Activated CD4-positive, alpha-beta T cell treated with anti-CD3 and anti-CD28 coated beads, Interleukin-2, amount 10 ng/mL, durations not matched to agents 24 days and 14 days (primary cell): ENCODE measurements at regions of chr11 and their contacts with region 1.

Region 1: DNA sequence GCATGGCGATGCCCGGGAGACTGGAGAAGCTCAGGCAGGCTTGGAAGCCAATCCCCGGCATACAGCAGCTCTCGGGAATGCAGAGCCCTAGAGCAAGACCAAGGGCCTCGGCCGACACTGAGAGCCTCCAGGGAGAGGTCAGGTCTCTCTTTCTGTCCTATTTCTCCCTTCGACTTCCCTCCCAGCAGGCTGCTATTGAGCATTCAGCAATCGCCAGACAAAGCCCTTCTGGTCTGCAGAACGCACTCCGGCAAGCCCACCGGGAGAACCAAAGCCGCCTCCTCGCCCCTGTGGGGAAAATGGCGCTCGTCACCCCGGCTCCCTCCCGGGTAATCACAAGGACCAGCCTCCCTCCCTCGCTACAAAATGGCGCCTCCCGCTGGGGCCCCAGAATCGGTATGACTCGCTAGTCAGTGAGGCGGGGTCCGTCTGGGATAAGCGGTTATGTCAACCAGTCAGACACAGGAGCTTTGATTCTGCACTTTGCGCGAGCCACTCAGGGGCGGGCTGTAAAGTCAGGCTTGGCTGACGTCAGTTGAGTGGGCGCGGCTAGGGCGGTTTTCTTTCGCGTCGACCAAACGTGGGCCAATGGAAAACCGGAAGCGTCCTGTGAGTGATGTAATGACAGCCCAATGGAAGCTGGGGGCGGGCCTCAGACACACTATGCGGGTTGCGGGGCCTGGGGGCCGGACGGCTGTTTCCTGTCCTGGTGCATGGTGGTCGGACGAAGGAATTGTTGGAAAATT is at the start of gene ZNF143:
- DNase-seq: peak; percentile 100
- H3K4me3 Mint-ChIP-seq: peak within 1 kb of the TSS; percentile 97
- H3K27ac Mint-ChIP-seq: peak within 1 kb of the TSS; percentile 98
- H3K4me1 Mint-ChIP-seq: peaks cover 23% of the 10 kb centered on the region
- H3K27me3 Mint-ChIP-seq: no peaks in the 10 kb centered on the region
- total RNA-seq, gene ZNF143: 38.6 and 39.2 TPM in 2 replicates

Region 2: GRCh38 chr11:8289492-8289918 is 1171.0 kb before region 1 on chr11:
- intact Hi-C with region 1: no loop called
- DNase-seq: no peak
- H3K4me3 Mint-ChIP-seq: no peak overlapping the region
- H3K27ac Mint-ChIP-seq: no peak overlapping the region
- H3K4me1 Mint-ChIP-seq: no peaks in the 10 kb centered on the region
- H3K27me3 Mint-ChIP-seq: peaks cover 4% of the 10 kb centered on the region

Region 3: GRCh38 chr11:9003573-9004309 is 456.8 kb before region 1 on chr11 and contains the start of gene NRIP3:
- intact Hi-C with region 1: loop called (anchors 5 kb)
- DNase-seq: peak; percentile 94
- H3K4me3 Mint-ChIP-seq: peak within 1 kb of the TSS; percentile 86
- H3K27ac Mint-ChIP-seq: peak within 1 kb of the TSS; percentile 77
- H3K4me1 Mint-ChIP-seq: peaks cover 26% of the 10 kb centered on the region
- H3K27me3 Mint-ChIP-seq: peaks cover 45% of the 10 kb centered on the region
- total RNA-seq, gene NRIP3: 4.8 and 5.3 TPM in 2 replicates

Region 4: GRCh38 chr11:9025101-9025850 is 435.2 kb before region 1 on chr11:
- intact Hi-C with region 1: no loop called
- DNase-seq: no peak
- H3K4me3 Mint-ChIP-seq: no peak overlapping the region
- H3K27ac Mint-ChIP-seq: no peak overlapping the region
- H3K4me1 Mint-ChIP-seq: peaks cover 9% of the 10 kb centered on the region
- H3K27me3 Mint-ChIP-seq: peaks cover 18% of the 10 kb centered on the region

Region 5: DNA sequence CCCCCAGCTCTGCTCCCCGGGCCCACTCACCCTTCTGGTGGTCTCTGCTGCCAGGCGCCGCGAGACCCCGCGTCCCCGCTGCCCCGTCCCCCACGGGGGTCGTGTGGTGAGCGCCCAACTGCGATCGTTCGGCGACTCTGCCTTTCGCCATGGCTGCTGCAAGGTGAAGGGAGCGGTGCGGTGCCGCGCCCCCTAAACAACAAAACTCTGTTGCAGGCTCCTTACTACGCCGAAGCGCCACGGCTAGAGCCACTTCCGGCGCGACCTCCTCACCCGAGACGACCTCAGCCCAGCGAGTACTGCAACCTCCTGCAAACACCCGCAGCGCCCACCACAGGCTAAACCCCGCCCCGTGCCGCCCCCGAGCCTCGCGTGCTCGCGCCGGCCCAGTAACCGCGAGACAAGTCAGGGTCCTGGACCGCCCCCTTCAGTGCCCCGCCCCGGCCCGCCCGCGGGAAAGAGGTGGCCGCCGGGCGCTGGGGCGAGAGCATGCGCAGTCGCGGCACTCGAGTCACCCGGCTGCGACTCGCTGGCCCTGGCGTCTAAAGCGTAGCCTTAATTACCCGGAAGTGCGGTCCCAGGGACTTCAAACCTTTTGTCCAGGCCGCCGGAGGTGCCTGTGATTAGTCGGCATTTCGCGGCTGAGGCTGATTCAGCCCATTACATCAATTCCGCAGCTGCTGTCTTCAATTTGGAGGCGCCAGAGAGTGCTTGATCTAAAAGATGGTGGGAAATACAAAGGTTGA is 146.0 kb before region 1 on chr11 and contains the start of gene TMEM41B:
- intact Hi-C with region 1: loop called (anchors 1 kb)
- DNase-seq: peak; percentile 100
- H3K4me3 Mint-ChIP-seq: peak within 1 kb of the TSS; percentile 99
- H3K27ac Mint-ChIP-seq: peak within 1 kb of the TSS; percentile 97
- H3K4me1 Mint-ChIP-seq: peaks cover 38% of the 10 kb centered on the region
- H3K27me3 Mint-ChIP-seq: peaks cover 23% of the 10 kb centered on the region
- total RNA-seq, gene TMEM41B: 26.5 and 30.5 TPM in 2 replicates

Region 6: DNA sequence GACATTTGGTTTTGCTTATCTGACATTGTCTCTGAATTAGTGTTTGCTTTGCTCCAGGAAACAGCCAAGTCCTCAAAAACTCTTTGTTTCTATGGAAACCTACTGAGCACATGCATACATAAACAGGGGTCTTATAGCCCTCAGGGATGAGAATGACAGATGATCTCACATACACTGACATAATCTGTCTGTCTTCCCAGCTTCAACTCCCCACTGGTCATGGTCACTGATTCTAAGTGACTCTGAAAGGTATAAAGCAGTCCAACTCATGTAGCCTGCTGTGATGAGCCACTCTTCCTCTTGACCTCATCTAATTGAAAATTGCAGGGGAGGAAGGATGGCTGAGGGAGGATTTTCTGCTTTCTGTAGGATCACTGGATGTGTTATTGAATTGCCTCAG is 12.9 kb after region 1 on chr11:
- intact Hi-C with region 1: no loop called
- DNase-seq: no peak
- H3K4me3 Mint-ChIP-seq: no peak overlapping the region
- H3K27ac Mint-ChIP-seq: no peak overlapping the region
- H3K4me1 Mint-ChIP-seq: peaks cover 7% of the 10 kb centered on the region
- H3K27me3 Mint-ChIP-seq: no peaks in the 10 kb centered on the region

Region 7: GRCh38 chr11:9506489-9507276 is 46.2 kb after region 1 on chr11:
- intact Hi-C with region 1: loop called (anchors 5 kb)
- DNase-seq: peak; percentile 93
- H3K4me3 Mint-ChIP-seq: no peak overlapping the region
- H3K27ac Mint-ChIP-seq: no peak overlapping the region
- H3K4me1 Mint-ChIP-seq: peaks cover 13% of the 10 kb centered on the region
- H3K27me3 Mint-ChIP-seq: no peaks in the 10 kb centered on the region

Region 8: GRCh38 chr11:9518835-9519410 is 58.4 kb after region 1 on chr11:
- intact Hi-C with region 1: no loop called
- DNase-seq: no peak
- H3K4me3 Mint-ChIP-seq: no peak overlapping the region
- H3K27ac Mint-ChIP-seq: no peak overlapping the region
- H3K4me1 Mint-ChIP-seq: peaks cover 1% of the 10 kb centered on the region
- H3K27me3 Mint-ChIP-seq: no peaks in the 10 kb centered on the region

Region 9: DNA sequence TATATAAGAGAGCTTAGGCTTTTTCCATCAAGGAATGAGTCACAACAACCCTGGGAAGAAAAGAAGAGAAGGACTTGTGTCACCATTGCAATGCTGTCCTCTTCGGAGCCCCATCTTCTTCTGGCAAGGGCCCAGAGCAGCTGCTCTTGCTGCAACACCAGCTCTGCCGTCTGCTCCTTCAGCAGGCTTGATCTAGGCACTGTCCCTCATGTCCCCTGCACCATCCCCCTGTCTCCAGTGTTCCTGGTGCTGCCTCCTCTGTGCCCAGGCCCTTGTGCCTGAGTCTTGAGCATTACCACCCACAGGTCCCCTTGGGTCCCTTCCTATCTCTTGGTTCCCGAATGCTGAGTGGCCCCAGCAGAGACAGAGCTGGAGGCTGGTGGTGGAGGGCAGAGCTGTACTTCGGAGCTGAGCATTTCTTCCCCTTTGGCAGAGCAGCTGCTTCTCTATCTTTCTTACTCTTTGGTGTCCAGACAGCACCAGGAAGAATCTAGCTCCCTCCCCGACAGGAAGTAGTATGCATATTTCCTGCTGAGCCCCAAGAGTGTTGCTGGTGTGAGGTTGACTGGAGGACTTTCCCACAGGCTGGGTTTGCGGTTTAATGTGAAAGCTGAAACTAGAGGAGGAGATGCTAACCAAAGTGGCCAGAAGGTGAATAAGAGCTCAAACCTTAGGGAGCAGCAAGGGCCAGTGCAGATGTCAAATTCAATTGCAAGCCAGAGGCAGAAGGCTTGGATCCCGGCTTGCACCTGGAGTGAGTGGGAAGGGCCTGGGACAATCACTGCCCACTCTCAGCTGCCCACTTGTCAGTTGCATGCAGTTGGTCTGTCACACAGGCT is 140.8 kb after region 1 on chr11:
- intact Hi-C with region 1: loop called (anchors 2 kb)
- DNase-seq: peak; percentile 92
- H3K4me3 Mint-ChIP-seq: peak overlapping the region; percentile 83
- H3K27ac Mint-ChIP-seq: peak overlapping the region; percentile 88
- H3K4me1 Mint-ChIP-seq: peaks cover 30% of the 10 kb centered on the region
- H3K27me3 Mint-ChIP-seq: peaks cover 7% of the 10 kb centered on the region

Region 10: GRCh38 chr11:10808553-10809372 is 1348.3 kb after region 1 on chr11 and contains the start of gene EIF4G2:
- intact Hi-C with region 1: loop called (anchors 5 kb)
- DNase-seq: peak; percentile 99
- H3K4me3 Mint-ChIP-seq: peak within 1 kb of the TSS; percentile 95
- H3K27ac Mint-ChIP-seq: peak within 1 kb of the TSS; percentile 98
- H3K4me1 Mint-ChIP-seq: peaks cover 31% of the 10 kb centered on the region
- H3K27me3 Mint-ChIP-seq: no peaks in the 10 kb centered on the region
- total RNA-seq, gene EIF4G2: 1,071 and 1,120 TPM in 2 replicates